ENCODE measurements at regions of chr20 and their contacts with region 1.

Region 1: DNA sequence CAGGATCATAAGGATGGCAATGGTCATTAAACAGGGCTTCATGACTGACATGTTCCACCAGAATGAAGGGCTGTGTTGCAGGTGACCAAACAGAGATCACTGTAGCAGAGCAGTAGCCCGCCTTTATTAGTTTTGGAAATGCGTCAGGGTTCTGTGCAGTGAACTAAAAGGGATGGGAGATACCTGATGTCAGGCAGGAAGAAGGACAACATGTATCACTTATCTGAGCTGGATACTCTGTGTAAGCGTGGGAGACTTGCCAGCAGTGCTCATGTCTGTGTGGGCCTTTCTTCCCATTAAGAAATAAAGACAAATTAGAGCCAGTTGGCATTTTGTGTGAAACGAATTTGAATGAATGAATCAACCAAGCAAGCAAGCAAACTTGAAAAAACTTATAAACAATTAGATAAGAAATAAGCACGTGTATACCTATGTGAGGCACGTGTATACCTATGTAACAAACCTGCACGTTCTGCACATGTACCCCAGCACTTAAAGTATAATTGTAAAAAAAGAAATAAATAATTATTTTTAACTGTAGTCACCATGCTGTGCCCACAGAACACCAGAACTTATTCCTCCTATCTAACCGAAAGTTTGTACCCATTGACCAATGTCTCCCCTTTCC is at the start of gene DEFB116:
- DNase-seq: no peak
- H3K4me3 Mint-ChIP-seq: no peak within 1 kb of the TSS
- H3K27ac Mint-ChIP-seq: no peak within 1 kb of the TSS
- H3K4me1 Mint-ChIP-seq: no peaks in the 10 kb centered on the region
- H3K27me3 Mint-ChIP-seq: no peaks in the 10 kb centered on the region
- CTCF ChIP-seq: no peak
- total RNA-seq, gene DEFB116: not detected in 2 replicates

Region 2: DNA sequence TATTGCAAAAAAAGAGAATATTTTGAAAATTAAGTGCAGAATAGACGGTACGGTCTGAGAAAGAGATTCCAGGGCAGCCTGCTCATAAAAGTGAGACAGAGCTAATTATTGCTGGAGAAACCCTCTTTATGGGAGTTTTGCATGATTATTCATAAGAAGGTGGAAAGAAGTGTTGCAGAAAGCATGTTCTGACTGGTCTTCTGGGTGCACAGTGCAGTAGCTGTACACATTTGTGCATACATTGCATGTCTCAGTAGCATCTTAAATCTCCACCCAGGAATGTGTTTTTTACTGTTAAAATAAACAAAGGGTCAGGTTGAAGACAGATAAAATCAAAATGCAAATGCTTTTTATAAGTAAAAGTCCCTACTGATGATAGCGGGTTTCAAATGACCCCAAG is 1864.8 kb before region 1 on chr20:
- CTCF ChIA-PET with region 1: no interaction called
- POLR2A ChIA-PET with region 1: no interaction called
- intact Hi-C with region 1: loop called (anchors 2 kb)
- DNase-seq: no peak
- H3K4me3 Mint-ChIP-seq: no peak overlapping the region
- H3K27ac Mint-ChIP-seq: no peak overlapping the region
- H3K4me1 Mint-ChIP-seq: peaks cover 9% of the 10 kb centered on the region
- H3K27me3 Mint-ChIP-seq: no peaks in the 10 kb centered on the region
- CTCF ChIP-seq: no peak

Region 3: GRCh38 chr20:31322504-31322903 is 13.9 kb after region 1 on chr20:
- CTCF ChIA-PET with region 1: interaction called, 10 read pairs
- POLR2A ChIA-PET with region 1: interaction called, 3 read pairs
- intact Hi-C with region 1: no loop called
- DNase-seq: no peak
- H3K4me3 Mint-ChIP-seq: no peak overlapping the region
- H3K27ac Mint-ChIP-seq: no peak overlapping the region
- H3K4me1 Mint-ChIP-seq: no peaks in the 10 kb centered on the region
- H3K27me3 Mint-ChIP-seq: peaks cover 30% of the 10 kb centered on the region
- CTCF ChIP-seq: no peak

Region 4: GRCh38 chr20:31440012-31441002 is 131.7 kb after region 1 on chr20 and contains the start of gene DEFB123:
- CTCF ChIA-PET with region 1: interaction called, 5 read pairs
- POLR2A ChIA-PET with region 1: no interaction called
- intact Hi-C with region 1: loop called (anchors 5 kb)
- DNase-seq: no peak
- H3K4me3 Mint-ChIP-seq: no peak within 1 kb of the TSS
- H3K27ac Mint-ChIP-seq: no peak within 1 kb of the TSS
- H3K4me1 Mint-ChIP-seq: no peaks in the 10 kb centered on the region
- H3K27me3 Mint-ChIP-seq: peaks cover 35% of the 10 kb centered on the region
- CTCF ChIP-seq: peak; percentile 22
- total RNA-seq, gene DEFB123: not detected in 2 replicates

Region 5: GRCh38 chr20:31500527-31500926 is 191.9 kb after region 1 on chr20:
- CTCF ChIA-PET with region 1: interaction called, 75 read pairs
- POLR2A ChIA-PET with region 1: no interaction called
- intact Hi-C with region 1: loop called (anchors 2 kb)
- DNase-seq: no peak
- H3K4me3 Mint-ChIP-seq: no peak overlapping the region
- H3K27ac Mint-ChIP-seq: no peak overlapping the region
- H3K4me1 Mint-ChIP-seq: no peaks in the 10 kb centered on the region
- H3K27me3 Mint-ChIP-seq: peaks cover 21% of the 10 kb centered on the region
- CTCF ChIP-seq: no peak